Ascending aorta (tissue), 2 donors: ENCODE measurements at regions of chr6 and their contacts with region 1.

Region 1: GRCh38 chr6:158072083-158072721 is 90.5 kb downstream of the SYNJ2 start:
- DNase-seq: peak in 1 of 2 donors; percentile 88
- H3K4me3 ChIP-seq: no peak overlapping the region
- H3K27ac ChIP-seq: peak overlapping the region; percentile 26 to 36
- H3K4me1 ChIP-seq: peaks cover 0 to 11% of the 10 kb centered on the region in 2 donors
- H3K27me3 ChIP-seq: no peaks in the 10 kb centered on the region
- CTCF ChIP-seq: peak; percentile 81 to 93 (median 82)

Region 2: DNA sequence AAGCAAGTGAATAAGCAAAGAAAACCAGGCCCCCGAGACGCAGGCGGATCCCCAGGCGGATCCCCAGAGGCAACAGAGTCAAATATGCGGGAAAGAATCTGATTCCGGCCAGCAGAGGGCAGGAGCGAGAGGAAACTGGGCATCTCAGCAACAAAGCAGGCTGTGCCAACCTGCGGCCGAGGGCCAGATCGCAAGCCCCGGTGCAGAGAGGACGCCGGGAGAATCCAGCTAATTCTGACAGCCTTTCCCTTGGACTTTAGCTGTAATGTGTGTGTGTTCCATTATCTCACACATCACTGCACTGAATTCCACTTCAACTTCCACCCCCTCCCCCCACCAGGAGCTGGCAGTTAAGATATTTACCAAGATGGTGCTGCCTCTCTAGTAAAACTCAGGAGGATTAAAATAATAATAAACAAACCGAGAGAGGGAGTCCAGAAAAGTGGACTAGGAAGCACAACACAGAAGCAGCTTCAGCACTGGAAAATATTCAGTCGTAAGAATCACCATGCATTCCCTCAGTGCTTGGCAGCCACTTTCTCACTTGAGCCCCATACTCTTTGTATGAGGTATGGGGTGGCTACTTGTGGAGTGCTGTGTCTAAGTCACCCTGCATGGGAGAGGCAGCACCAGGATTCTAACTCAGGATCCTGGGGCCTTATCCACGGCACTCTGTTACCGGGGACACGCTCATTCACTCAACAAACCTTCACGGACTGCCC is 315.3 kb before region 1 on chr6:
- intact Hi-C with region 1: loop called (anchors 5 kb)
- DNase-seq: peak; percentile 47 to 95
- H3K4me3 ChIP-seq: peak overlapping the region in 1 of 2 donors; percentile 32
- H3K27ac ChIP-seq: peak overlapping the region; percentile 62 to 71
- H3K4me1 ChIP-seq: peaks cover 13 to 27% of the 10 kb centered on the region in 2 donors
- H3K27me3 ChIP-seq: no peaks in the 10 kb centered on the region
- CTCF ChIP-seq: peak; percentile 76 to 90 (median 89)

Region 3: DNA sequence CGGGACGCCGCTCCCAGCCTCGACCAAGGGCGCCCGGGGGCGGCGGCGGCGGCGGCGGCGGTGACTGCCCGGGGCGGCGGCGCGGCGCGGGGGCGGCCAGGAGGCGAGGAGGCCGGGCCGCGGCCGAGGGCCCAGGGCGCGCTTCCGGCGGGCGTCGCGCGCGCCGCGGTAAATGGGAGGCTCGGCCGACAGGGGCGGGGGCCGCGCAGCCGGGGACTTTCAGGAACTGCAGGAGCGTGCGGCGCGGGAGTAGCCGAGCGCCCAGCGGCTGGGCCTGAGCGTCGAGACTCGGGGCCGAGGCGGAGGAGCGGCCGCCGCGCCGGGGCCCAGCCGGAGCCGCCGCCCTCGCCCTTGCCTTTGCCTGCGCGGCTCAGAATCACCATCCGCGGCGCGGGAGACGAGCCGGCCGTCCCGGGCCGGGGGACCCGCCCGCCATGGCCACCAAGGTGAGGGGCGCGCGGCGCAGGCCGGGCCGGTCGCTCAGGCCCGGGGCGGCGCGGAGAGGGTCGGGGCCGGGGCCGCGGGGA is 249.1 kb before region 1 on chr6 and contains the start of gene SNX9:
- intact Hi-C with region 1: loop called (anchors 5 kb)
- DNase-seq: peak in 1 of 2 donors; percentile 89
- H3K4me3 ChIP-seq: peak within 1 kb of the TSS; percentile 90 to 98
- H3K27ac ChIP-seq: peak within 1 kb of the TSS; percentile 98 to 100
- H3K4me1 ChIP-seq: peaks cover 4 to 20% of the 10 kb centered on the region in 2 donors
- H3K27me3 ChIP-seq: no peaks in the 10 kb centered on the region
- CTCF ChIP-seq: peak in 1 of 3 experiments; percentile 28
- total RNA-seq, gene SNX9: 55.2 TPM

Region 4: DNA sequence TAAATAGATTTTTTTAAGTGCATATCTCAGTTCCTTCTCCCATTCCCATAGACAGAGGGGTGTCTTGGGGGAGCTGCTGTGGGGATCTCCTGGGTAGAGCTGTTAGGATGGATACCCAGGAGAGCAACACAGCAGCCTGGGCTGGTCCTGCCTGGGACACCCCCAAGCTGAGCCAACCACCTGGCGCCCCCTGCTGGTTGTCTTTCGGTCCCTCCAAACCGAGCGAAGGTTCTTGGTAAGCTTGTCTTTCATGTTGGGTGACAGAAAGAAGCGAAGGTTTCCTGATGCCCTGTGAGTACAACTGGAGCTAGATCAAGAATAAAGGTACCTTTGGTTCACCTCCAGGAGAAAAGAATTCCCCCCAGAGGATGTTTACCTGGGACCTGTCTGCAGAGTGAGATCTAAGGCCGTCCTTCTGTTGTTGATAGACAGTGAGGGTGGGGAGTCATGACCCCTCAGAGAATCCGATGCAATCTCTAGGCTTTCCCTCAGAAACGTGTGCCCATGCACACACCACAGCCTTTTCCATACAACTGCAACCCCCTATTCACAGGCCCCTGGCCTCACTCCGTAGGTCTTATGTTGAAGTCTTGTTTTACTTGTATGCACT is 198.4 kb before region 1 on chr6:
- intact Hi-C with region 1: no loop called
- DNase-seq: peak in 1 of 2 donors; percentile 85
- H3K4me3 ChIP-seq: no peak overlapping the region
- H3K27ac ChIP-seq: no peak overlapping the region
- H3K4me1 ChIP-seq: no peaks in the 10 kb centered on the region
- H3K27me3 ChIP-seq: no peaks in the 10 kb centered on the region
- CTCF ChIP-seq: peak; percentile 63 to 78 (median 66)

Region 5: DNA sequence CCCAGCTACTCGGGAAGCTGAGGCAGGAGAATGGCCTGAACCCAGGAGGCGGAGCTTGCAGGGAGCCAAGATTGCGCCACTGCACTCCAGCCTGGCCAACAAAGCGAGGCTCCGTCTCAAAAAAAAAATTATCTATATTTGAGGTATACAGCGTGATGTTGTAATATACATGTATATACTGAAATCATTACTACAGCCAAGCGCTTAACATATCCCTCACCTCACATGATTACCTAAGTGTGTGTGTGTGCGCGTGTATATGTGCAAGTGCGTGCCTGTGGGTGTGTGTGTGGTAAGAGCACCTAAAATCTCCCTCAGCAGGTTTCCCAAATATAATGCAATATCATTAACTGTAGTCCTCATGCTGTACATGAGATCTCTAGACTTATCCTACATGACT is 172.5 kb before region 1 on chr6:
- intact Hi-C with region 1: loop called (anchors 5 kb)
- DNase-seq: no peak
- H3K4me3 ChIP-seq: no peak overlapping the region
- H3K27ac ChIP-seq: no peak overlapping the region
- H3K4me1 ChIP-seq: peaks cover 0 to 4% of the 10 kb centered on the region in 2 donors
- H3K27me3 ChIP-seq: no peaks in the 10 kb centered on the region
- CTCF ChIP-seq: no peak

Region 6: GRCh38 chr6:158205169-158205944 is 133.2 kb after region 1 on chr6:
- intact Hi-C with region 1: no loop called
- DNase-seq: no peak
- H3K4me3 ChIP-seq: no peak overlapping the region
- H3K27ac ChIP-seq: no peak overlapping the region
- H3K4me1 ChIP-seq: no peaks in the 10 kb centered on the region
- H3K27me3 ChIP-seq: no peaks in the 10 kb centered on the region
- CTCF ChIP-seq: peak in 1 of 3 experiments; percentile 32